ENCODE measurements at regions of chr4 and their contacts with region 1.

Region 1: GRCh38 chr4:88284439-88285234 is at the start of gene PPM1K:
- DNase-seq: peak; percentile 99 to 100 (median 99)
- ATAC-seq: peak; percentile 82
- H3K4me3 ChIP-seq: peak within 1 kb of the TSS; percentile 79 to 99
- H3K4me3 Mint-ChIP-seq: peak within 1 kb of the TSS; percentile 84
- H3K27ac ChIP-seq: peak within 1 kb of the TSS; percentile 97 to 99
- H3K27ac Mint-ChIP-seq: peak within 1 kb of the TSS; percentile 94
- H3K4me1 ChIP-seq: peaks cover 39% of the 10 kb centered on the region
- H3K4me1 Mint-ChIP-seq: peaks cover 46% of the 10 kb centered on the region
- H3K27me3 ChIP-seq: no peaks in the 10 kb centered on the region
- H3K27me3 Mint-ChIP-seq: no peaks in the 10 kb centered on the region
- CTCF ChIP-seq: no peak
- total RNA-seq, gene PPM1K: 59.8 to 61.0 TPM

Region 2: GRCh38 chr4:87220094-87220822 is 1064.4 kb before region 1 on chr4 and contains the start of gene KLHL8:
- CTCF ChIA-PET with region 1: no interaction called
- POLR2A ChIA-PET with region 1: interaction called, 3 read pairs
- intact Hi-C with region 1: loop called in 1 of 2 experiments (anchors 10 kb)
- DNase-seq: peak; percentile 75 to 94 (median 85)
- ATAC-seq: peak; percentile 90
- H3K4me3 ChIP-seq: peak within 1 kb of the TSS; percentile 91 to 99
- H3K4me3 Mint-ChIP-seq: peak within 1 kb of the TSS; percentile 94
- H3K27ac ChIP-seq: peak within 1 kb of the TSS; percentile 86 to 92
- H3K27ac Mint-ChIP-seq: peak within 1 kb of the TSS; percentile 91
- H3K4me1 ChIP-seq: peaks cover 9% of the 10 kb centered on the region
- H3K4me1 Mint-ChIP-seq: peaks cover 18% of the 10 kb centered on the region
- H3K27me3 ChIP-seq: no peaks in the 10 kb centered on the region
- H3K27me3 Mint-ChIP-seq: no peaks in the 10 kb centered on the region
- CTCF ChIP-seq: peak; percentile 39
- total RNA-seq, gene KLHL8: 8.2 to 8.7 TPM

Region 3: GRCh38 chr4:88230969-88231771 is 53.5 kb before region 1 on chr4:
- CTCF ChIA-PET with region 1: no interaction called
- POLR2A ChIA-PET with region 1: interaction called, 3 read pairs
- intact Hi-C with region 1: loop called in 1 of 2 experiments (anchors 5 kb)
- DNase-seq: peak in 2 of 9 experiments; percentile 11 to 36
- ATAC-seq: peak; percentile 71
- H3K4me3 ChIP-seq: peak overlapping the region in 1 of 2 experiments; percentile 10
- H3K4me3 Mint-ChIP-seq: peak overlapping the region; percentile 67
- H3K27ac ChIP-seq: peak overlapping the region in 1 of 2 experiments; percentile 41
- H3K27ac Mint-ChIP-seq: peak overlapping the region; percentile 84
- H3K4me1 ChIP-seq: no peaks in the 10 kb centered on the region
- H3K4me1 Mint-ChIP-seq: peaks cover 18% of the 10 kb centered on the region
- H3K27me3 ChIP-seq: no peaks in the 10 kb centered on the region
- H3K27me3 Mint-ChIP-seq: no peaks in the 10 kb centered on the region
- CTCF ChIP-seq: no peak

Region 4: DNA sequence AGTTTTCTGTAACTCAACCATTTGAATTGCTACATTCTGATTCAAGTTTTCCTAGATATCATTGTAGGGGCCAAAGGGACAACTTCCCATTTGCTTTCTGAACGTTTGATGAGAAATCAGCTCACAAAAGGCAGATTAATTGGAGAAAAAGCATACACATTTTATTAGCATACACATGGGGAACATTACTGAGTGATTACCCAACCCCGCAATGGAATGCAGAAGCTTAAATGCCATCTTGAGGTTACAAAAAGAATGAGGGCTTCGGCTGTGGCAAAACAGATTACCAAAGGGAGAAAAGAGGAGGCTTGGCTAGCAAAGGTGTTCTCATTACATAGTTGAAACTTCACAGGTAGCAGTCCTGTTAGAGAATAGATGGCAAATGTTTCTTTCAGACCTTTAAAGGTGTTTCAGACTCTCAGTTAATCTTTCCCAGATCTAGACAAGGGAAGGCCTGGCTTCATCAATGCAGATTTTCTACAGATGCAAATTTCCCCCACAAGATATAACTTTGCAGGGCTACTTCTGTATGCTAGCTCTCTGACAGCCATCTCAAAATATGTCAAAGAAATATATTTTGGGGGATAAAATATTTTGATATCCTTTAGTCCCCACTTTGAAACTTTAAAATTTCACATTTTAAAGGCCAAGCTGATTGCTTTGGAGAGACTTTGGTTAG is 67.6 kb after region 1 on chr4:
- CTCF ChIA-PET with region 1: no interaction called
- POLR2A ChIA-PET with region 1: no interaction called
- intact Hi-C with region 1: no loop called
- DNase-seq: no peak
- ATAC-seq: no peak
- H3K4me3 ChIP-seq: no peak overlapping the region
- H3K4me3 Mint-ChIP-seq: no peak overlapping the region
- H3K27ac ChIP-seq: no peak overlapping the region
- H3K27ac Mint-ChIP-seq: no peak overlapping the region
- H3K4me1 ChIP-seq: no peaks in the 10 kb centered on the region
- H3K4me1 Mint-ChIP-seq: no peaks in the 10 kb centered on the region
- H3K27me3 ChIP-seq: no peaks in the 10 kb centered on the region
- H3K27me3 Mint-ChIP-seq: no peaks in the 10 kb centered on the region
- CTCF ChIP-seq: no peak

Region 5: DNA sequence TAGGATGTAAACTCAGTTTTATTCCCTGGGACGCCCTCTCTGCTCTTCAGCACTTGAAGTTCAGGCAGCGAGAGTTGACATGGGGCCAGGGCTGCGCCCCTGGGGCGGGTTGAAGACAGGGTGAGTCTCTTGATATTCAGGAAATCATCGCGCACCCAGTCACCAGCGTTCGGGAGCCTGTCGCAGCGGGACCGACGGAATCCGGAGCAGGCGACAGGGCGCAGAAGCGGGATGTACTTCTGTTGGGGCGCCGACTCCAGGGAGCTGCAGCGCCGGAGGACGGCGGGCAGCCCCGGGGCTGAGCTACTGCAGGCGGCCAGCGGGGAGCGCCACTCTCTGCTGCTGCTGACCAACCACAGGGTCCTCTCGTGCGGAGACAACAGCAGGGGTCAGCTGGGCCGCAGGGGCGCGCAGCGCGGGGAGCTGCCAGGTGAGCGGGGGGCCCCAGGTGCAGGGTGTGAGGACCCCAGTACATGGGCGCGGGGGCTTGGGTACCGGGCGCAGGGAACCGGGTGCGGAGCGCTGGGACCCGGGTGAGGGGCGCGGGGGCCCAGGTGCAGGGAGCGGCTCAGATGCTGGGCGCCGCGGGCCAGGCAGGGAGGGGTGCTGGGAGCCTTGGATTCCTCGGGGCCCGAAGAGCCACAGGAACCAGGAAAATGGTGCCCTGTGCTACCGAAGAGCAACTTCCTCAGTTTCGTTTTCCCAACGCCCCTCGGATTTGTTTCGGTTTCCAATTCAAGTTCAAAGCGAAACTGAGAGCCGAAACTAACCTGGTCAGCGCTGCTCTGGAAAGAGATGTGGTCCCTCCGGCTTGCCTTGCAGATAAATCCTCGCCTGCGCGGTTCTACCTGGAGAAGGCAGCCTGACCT is 94.3 kb after region 1 on chr4 and contains the start of gene HERC6:
- CTCF ChIA-PET with region 1: interaction called, 6 read pairs
- POLR2A ChIA-PET with region 1: interaction called, 21 read pairs
- intact Hi-C with region 1: loop called (anchors 1 kb)
- DNase-seq: peak; percentile 39 to 93 (median 73)
- ATAC-seq: peak; percentile 63
- H3K4me3 ChIP-seq: peak within 1 kb of the TSS; percentile 82 to 98
- H3K4me3 Mint-ChIP-seq: peak within 1 kb of the TSS; percentile 96
- H3K27ac ChIP-seq: peak within 1 kb of the TSS; percentile 88 to 91
- H3K27ac Mint-ChIP-seq: peak within 1 kb of the TSS; percentile 95
- H3K4me1 ChIP-seq: peaks cover 31% of the 10 kb centered on the region
- H3K4me1 Mint-ChIP-seq: peaks cover 43% of the 10 kb centered on the region
- H3K27me3 ChIP-seq: no peaks in the 10 kb centered on the region
- H3K27me3 Mint-ChIP-seq: no peaks in the 10 kb centered on the region
- CTCF ChIP-seq: peak; percentile 57
- total RNA-seq, gene HERC6: 8.2 TPM

Region 6: GRCh38 chr4:88591787-88592599 is 307.4 kb after region 1 on chr4 and contains the start of gene HERC3:
- CTCF ChIA-PET with region 1: no interaction called
- POLR2A ChIA-PET with region 1: interaction called, 12 read pairs
- intact Hi-C with region 1: loop called (anchors 2 to 5 kb)
- DNase-seq: peak; percentile 75 to 94 (median 88)
- ATAC-seq: peak; percentile 84
- H3K4me3 ChIP-seq: peak within 1 kb of the TSS; percentile 89 to 96
- H3K4me3 Mint-ChIP-seq: peak within 1 kb of the TSS; percentile 99
- H3K27ac ChIP-seq: peak within 1 kb of the TSS; percentile 82 to 85
- H3K27ac Mint-ChIP-seq: peak within 1 kb of the TSS; percentile 97
- H3K4me1 ChIP-seq: peaks cover 22% of the 10 kb centered on the region
- H3K4me1 Mint-ChIP-seq: peaks cover 43% of the 10 kb centered on the region
- H3K27me3 ChIP-seq: no peaks in the 10 kb centered on the region
- H3K27me3 Mint-ChIP-seq: no peaks in the 10 kb centered on the region
- CTCF ChIP-seq: no peak
- total RNA-seq, gene HERC3: 50.4 to 62.4 TPM

Region 7: GRCh38 chr4:88823058-88823919 is 538.7 kb after region 1 on chr4:
- CTCF ChIA-PET with region 1: no interaction called
- POLR2A ChIA-PET with region 1: no interaction called
- intact Hi-C with region 1: loop called in 1 of 2 experiments (anchors 10 kb)
- DNase-seq: peak; percentile 36 to 94 (median 61)
- ATAC-seq: peak; percentile 95
- H3K4me3 ChIP-seq: peak overlapping the region; percentile 42 to 51
- H3K4me3 Mint-ChIP-seq: peak overlapping the region; percentile 93
- H3K27ac ChIP-seq: peak overlapping the region; percentile 52 to 83
- H3K27ac Mint-ChIP-seq: peak overlapping the region; percentile 94
- H3K4me1 ChIP-seq: peaks cover 5% of the 10 kb centered on the region
- H3K4me1 Mint-ChIP-seq: peaks cover 29% of the 10 kb centered on the region
- H3K27me3 ChIP-seq: peaks cover 0 to 2% of the 10 kb centered on the region in 2 experiments
- H3K27me3 Mint-ChIP-seq: no peaks in the 10 kb centered on the region
- CTCF ChIP-seq: no peak

Measured in CD8-positive, alpha-beta T cell (primary cell).